A549 (cell line): ENCODE measurements at regions of chr1 and their contacts with region 1.

Region 1: DNA sequence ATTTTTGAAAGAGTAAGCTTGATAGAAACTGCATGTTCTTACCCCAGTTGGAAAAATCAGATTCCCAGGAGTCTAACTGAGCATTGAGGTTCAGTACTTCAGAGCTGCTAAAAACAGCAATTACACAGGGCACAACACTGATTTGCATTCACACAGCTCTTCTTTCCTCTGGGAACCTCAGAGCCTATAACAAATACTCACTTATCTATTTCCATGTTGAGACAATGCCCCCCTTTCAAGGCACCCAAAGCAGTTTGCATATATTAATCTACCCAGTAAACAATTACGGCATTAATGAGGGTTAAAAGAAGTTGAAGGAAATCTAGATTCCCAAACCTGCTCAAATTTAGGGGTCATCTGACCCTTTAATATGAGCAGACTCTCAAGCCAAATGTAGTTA is 126.9 kb upstream of the SLC35F3 start:
- DNase-seq: no peak
- ATAC-seq: no peak
- H3K4me3 ChIP-seq: no peak overlapping the region
- H3K27ac ChIP-seq: no peak overlapping the region
- H3K4me1 ChIP-seq: no peaks in the 10 kb centered on the region
- CTCF ChIP-seq: no peak
- EP300 ChIP-seq: no peak
- POLR2A ChIP-seq: no peak
- RAD21 ChIP-seq: no peak

Region 2: GRCh38 chr1:233790662-233791375 is 13.3 kb after region 1 on chr1:
- CTCF ChIA-PET with region 1: interaction called, 13 read pairs
- POLR2A ChIA-PET with region 1: no interaction called
- DNase-seq: peak; percentile 75 to 88
- ATAC-seq: peak; percentile 98 to 99
- H3K4me3 ChIP-seq: no peak overlapping the region
- H3K27ac ChIP-seq: no peak overlapping the region
- H3K4me1 ChIP-seq: no peaks in the 10 kb centered on the region
- CTCF ChIP-seq: peak; percentile 93
- EP300 ChIP-seq: no peak
- POLR2A ChIP-seq: no peak
- RAD21 ChIP-seq: peak; percentile 89 to 94

Region 3: DNA sequence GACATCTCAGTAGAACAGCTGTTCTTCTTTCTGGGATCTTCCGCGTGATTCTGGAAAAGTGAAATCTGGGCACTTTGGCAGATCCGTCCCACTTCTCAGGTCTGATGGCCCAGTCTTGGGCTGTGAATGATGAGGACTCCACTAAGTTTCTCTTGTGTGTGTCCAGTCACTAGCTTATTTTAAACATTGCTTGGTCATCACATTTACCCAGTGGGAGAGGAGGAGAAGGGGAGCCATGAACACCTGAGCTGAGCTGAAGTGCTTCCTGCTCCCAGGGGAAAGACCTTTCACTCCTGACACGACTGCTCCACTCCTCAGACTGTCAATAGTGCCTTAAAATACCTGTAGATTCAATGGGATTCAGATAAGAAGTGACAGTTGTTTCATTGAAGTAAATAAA is 25.0 kb after region 1 on chr1:
- CTCF ChIA-PET with region 1: no interaction called
- POLR2A ChIA-PET with region 1: no interaction called
- DNase-seq: no peak
- ATAC-seq: no peak
- H3K4me3 ChIP-seq: no peak overlapping the region
- H3K27ac ChIP-seq: no peak overlapping the region
- H3K4me1 ChIP-seq: no peaks in the 10 kb centered on the region
- CTCF ChIP-seq: no peak
- EP300 ChIP-seq: no peak
- POLR2A ChIP-seq: no peak
- RAD21 ChIP-seq: no peak